H1 (cell line): ENCODE measurements at regions of chr6 and their contacts with region 1.

Region 1: GRCh38 chr6:35452186-35453090 is at the start of gene FANCE:
- DNase-seq: peak; percentile 90 to 100
- H3K4me3 ChIP-seq: peak within 1 kb of the TSS; percentile 23 to 67 (median 59)
- H3K27ac ChIP-seq: no peak within 1 kb of the TSS
- H3K4me1 ChIP-seq: peaks cover 7 to 14% (median 10%) of the 10 kb centered on the region in 4 experiments; a peak in 6 of 7 replicates
- H3K27me3 ChIP-seq: no peaks in the 10 kb centered on the region
- CTCF ChIP-seq: no peak
- EP300 ChIP-seq: no peak
- POLR2A ChIP-seq: no peak
- RAD21 ChIP-seq: no peak
- total RNA-seq, gene FANCE: 16.1 and 16.4 TPM in 2 replicates

Region 2: GRCh38 chr6:35297601-35298481 is 154.6 kb before region 1 on chr6 and contains the start of gene DEF6:
- CTCF ChIA-PET with region 1: interaction called, 161 read pairs
- POLR2A ChIA-PET with region 1: interaction called, 3 read pairs
- DNase-seq: peak; percentile 83 to 85
- H3K4me3 ChIP-seq: peak within 1 kb of the TSS in 1 of 4 experiments; percentile 49; a peak in 2 of 8 replicates
- H3K27ac ChIP-seq: no peak within 1 kb of the TSS
- H3K4me1 ChIP-seq: peaks cover 4 to 14% (median 11%) of the 10 kb centered on the region in 4 experiments
- H3K27me3 ChIP-seq: no peaks in the 10 kb centered on the region
- CTCF ChIP-seq: peak; percentile 95 to 98 (median 97)
- EP300 ChIP-seq: no peak; a peak in 1 of 3 replicates
- POLR2A ChIP-seq: 0 out of 3 replicates have a peak, but pooled peaks of 1 of the 2 experiments have one; percentile 14
- RAD21 ChIP-seq: peak; percentile 99 to 100
- total RNA-seq, gene DEF6: 4.1 and 4.5 TPM in 2 replicates

Region 3: GRCh38 chr6:35318196-35319171 is 134.0 kb before region 1 on chr6:
- CTCF ChIA-PET with region 1: interaction called, 15 read pairs
- POLR2A ChIA-PET with region 1: no interaction called
- DNase-seq: peak; percentile 87 to 100
- H3K4me3 ChIP-seq: peak overlapping the region; percentile 42 to 62 (median 58)
- H3K27ac ChIP-seq: no peak overlapping the region
- H3K4me1 ChIP-seq: peaks cover 5 to 8% (median 6%) of the 10 kb centered on the region in 4 experiments
- H3K27me3 ChIP-seq: peaks cover 3 to 19% (median 14%) of the 10 kb centered on the region in 4 experiments
- CTCF ChIP-seq: no peak
- EP300 ChIP-seq: no peak
- POLR2A ChIP-seq: no peak
- RAD21 ChIP-seq: no peak

Region 4: DNA sequence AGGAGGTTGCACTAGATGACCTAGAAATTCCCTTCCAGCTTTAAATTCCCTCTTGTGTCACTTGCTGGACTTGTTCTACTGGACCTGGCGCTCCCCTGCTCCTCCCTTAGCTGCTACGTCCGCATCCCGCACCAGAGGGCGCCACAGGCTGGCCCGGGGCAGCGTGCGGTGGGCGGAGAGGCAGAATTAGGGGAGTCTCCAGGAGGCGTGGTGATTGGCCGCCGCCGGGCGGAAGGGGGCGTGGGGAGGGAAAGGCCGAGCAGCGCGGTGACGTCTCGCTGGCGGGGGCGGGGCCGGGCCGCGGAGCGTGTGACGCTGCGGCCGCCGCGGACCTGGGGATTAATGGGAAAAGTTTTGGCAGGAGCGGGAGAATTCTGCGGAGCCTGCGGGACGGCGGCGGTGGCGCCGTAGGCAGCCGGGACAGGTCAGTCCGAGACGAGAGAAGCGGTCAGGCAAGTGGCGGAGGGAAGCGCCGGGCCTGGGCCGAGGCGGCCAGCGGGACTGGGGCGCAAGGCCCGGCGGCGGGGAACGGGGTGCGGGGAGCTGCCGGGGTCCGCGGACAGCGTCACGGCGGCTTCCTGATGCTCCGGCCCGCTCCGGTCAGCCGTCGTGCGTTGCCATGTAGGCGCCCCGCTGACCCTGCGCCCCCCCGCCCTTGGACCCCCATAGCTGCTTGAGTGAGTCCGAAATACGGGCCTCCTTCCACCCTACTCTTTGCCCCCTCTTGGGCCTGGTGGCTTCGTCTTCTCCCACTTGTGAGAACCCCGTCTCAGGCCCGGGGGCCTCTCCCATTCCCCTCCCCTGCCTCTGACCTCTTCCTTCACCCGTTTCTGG is 110.0 kb before region 1 on chr6 and contains the start of gene PPARD:
- CTCF ChIA-PET with region 1: interaction called, 140 read pairs
- POLR2A ChIA-PET with region 1: interaction called, 4 read pairs
- DNase-seq: peak; percentile 82 to 100
- H3K4me3 ChIP-seq: peak within 1 kb of the TSS; percentile 38 to 77 (median 62)
- H3K27ac ChIP-seq: no peak within 1 kb of the TSS
- H3K4me1 ChIP-seq: peaks cover 0 to 7% (median 1%) of the 10 kb centered on the region in 4 experiments; a peak in 3 of 7 replicates
- H3K27me3 ChIP-seq: no peaks in the 10 kb centered on the region
- CTCF ChIP-seq: peak; percentile 95 to 98 (median 95)
- EP300 ChIP-seq: no peak
- POLR2A ChIP-seq: 0 out of 3 replicates have a peak, but pooled peaks of 1 of the 2 experiments have one; percentile 21
- RAD21 ChIP-seq: peak; percentile 99 to 100
- total RNA-seq, gene PPARD: 14.9 and 16.9 TPM in 2 replicates

Region 5: GRCh38 chr6:35402136-35402855 is 50.1 kb before region 1 on chr6:
- CTCF ChIA-PET with region 1: interaction called, 29 read pairs
- POLR2A ChIA-PET with region 1: no interaction called
- DNase-seq: no peak
- H3K4me3 ChIP-seq: no peak overlapping the region
- H3K27ac ChIP-seq: no peak overlapping the region
- H3K4me1 ChIP-seq: peaks cover 0 to 8% (median 0%) of the 10 kb centered on the region in 4 experiments; a peak in 2 of 7 replicates
- H3K27me3 ChIP-seq: no peaks in the 10 kb centered on the region
- CTCF ChIP-seq: no peak
- EP300 ChIP-seq: no peak
- POLR2A ChIP-seq: no peak
- RAD21 ChIP-seq: no peak

Region 6: DNA sequence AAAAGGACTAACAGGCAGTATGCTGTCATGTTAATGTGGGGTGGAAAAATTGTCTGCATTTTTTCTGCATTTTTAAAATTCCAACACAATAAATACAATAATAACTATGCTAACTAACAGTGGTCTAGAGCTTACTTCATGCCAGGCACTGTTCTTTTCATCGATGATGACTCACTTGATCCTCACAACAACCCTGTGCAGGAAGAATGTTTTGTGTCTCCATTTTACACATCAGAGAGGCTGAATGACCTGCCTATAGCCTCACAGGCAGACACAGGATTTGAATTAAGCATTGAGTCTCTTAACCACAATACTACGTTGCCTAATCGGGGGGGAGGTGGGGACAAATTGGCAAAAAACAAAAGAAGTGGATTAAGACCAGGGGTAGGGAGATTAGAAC is 27.2 kb before region 1 on chr6:
- CTCF ChIA-PET with region 1: interaction called, 50 read pairs
- POLR2A ChIA-PET with region 1: no interaction called
- DNase-seq: no peak
- H3K4me3 ChIP-seq: no peak overlapping the region
- H3K27ac ChIP-seq: 0 out of 2 replicates have a peak overlapping the region, but pooled peaks have one; percentile 9
- H3K4me1 ChIP-seq: peaks cover 6 to 28% (median 16%) of the 10 kb centered on the region in 4 experiments
- H3K27me3 ChIP-seq: no peaks in the 10 kb centered on the region
- CTCF ChIP-seq: no peak
- EP300 ChIP-seq: no peak
- POLR2A ChIP-seq: no peak
- RAD21 ChIP-seq: no peak

Region 7: GRCh38 chr6:35468181-35468979 is 15.9 kb after region 1 on chr6 and contains the start of gene RPL10A:
- CTCF ChIA-PET with region 1: interaction called, 24 read pairs
- POLR2A ChIA-PET with region 1: interaction called, 197 read pairs
- DNase-seq: peak; percentile 82 to 96
- H3K4me3 ChIP-seq: peak within 1 kb of the TSS; percentile 86 to 99 (median 92)
- H3K27ac ChIP-seq: peak within 1 kb of the TSS; percentile 94
- H3K4me1 ChIP-seq: peaks cover 0 to 8% (median 5%) of the 10 kb centered on the region in 4 experiments; a peak in 6 of 7 replicates
- H3K27me3 ChIP-seq: no peaks in the 10 kb centered on the region; a peak in 1 of 7 replicates
- CTCF ChIP-seq: peak in 2 of 3 experiments; percentile 90 to 97; a peak in 3 of 4 replicates
- EP300 ChIP-seq: no peak
- POLR2A ChIP-seq: peak in 1 of 2 experiments; percentile 100; a peak in 2 of 3 replicates
- RAD21 ChIP-seq: peak; percentile 78 to 85
- total RNA-seq, gene RPL10A: 1,893 and 1,923 TPM in 2 replicates

Region 8: DNA sequence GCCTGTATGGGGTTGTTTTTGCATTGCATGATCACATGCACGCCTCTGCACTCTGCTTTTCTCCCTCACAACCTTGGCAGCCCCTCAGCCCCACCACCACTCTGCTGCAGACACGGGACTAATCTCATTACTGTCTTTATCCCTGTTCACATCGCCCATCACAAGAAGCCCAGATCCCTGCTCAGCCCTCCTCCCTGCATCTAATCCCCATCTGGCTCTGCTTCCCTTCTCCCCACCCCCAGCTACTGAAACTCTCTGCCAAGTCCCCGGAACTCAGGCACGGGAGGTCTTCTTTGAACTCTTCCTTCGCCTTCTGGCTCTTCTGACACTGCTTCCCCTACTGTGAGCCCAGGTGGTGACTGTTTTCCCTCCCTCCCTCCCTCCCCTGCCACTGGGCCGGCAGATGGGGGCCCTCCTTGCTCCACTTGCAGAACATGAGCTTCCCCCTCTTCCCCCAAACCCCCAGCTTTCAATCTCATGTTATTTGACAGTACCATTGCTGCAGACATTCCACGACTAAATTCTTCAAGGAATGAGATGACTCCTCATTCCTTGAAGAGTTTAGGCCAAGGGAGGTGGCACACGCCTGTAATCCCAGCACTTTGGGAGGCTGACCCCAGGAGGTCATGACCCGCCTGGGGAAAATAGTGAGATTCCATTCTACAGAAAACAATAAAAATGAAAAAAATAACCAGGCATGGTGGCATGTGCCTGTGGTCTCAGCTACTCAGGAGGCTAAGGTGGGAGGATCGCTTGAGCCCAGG is 82.2 kb after region 1 on chr6:
- CTCF ChIA-PET with region 1: no interaction called
- POLR2A ChIA-PET with region 1: no interaction called
- DNase-seq: no peak
- H3K4me3 ChIP-seq: no peak overlapping the region
- H3K27ac ChIP-seq: no peak overlapping the region
- H3K4me1 ChIP-seq: peaks cover 2 to 9% (median 6%) of the 10 kb centered on the region in 4 experiments; a peak in 5 of 7 replicates
- H3K27me3 ChIP-seq: no peaks in the 10 kb centered on the region
- CTCF ChIP-seq: no peak
- EP300 ChIP-seq: no peak
- POLR2A ChIP-seq: no peak
- RAD21 ChIP-seq: no peak

Region 9: DNA sequence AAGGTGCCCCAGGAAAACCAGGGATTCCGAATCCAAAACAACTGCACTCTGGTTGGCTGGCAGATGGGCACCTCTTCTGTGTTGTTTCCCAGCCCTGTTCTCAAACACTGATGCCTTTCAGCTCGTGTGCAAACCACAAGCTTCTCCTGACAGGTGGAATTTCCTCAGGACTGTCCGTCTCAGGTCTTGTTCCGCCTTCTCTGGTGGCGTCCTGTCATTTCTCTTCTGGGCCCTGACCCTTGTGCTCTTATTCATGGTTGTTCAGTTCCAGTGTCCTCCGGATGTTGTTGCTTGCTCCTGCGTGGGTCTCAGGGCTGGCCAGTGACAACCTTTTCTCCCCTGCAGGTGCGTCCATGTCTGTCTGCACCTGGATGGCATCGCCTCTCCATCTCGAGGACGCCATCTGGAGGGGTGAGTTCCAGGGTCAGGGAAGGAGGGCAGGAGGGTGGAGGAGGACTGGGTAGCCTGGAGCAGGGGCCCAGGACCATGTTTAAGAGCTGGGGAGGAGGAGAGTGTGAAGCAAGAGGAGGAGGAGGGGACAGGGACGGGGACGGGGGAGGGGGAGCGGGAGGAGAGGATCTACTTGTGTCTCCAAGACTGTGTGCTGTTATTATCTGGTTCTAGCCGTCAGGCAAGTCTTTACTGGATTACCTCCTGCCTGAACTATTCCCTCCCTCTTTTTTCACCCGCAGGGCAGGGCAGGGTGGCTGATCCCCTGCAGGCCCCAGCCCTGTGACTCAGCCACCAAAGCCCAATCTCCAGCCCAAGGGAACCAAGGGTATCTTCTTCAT is 92.3 kb after region 1 on chr6:
- CTCF ChIA-PET with region 1: no interaction called
- POLR2A ChIA-PET with region 1: no interaction called
- DNase-seq: no peak
- H3K4me3 ChIP-seq: peak overlapping the region in 1 of 4 experiments; percentile 14; a peak in 1 of 8 replicates
- H3K27ac ChIP-seq: no peak overlapping the region
- H3K4me1 ChIP-seq: peaks cover 0 to 12% (median 5%) of the 10 kb centered on the region in 4 experiments; a peak in 6 of 7 replicates
- H3K27me3 ChIP-seq: no peaks in the 10 kb centered on the region
- CTCF ChIP-seq: no peak
- EP300 ChIP-seq: no peak
- POLR2A ChIP-seq: no peak
- RAD21 ChIP-seq: peak in 1 of 2 experiments; percentile 0; a peak in 1 of 4 replicates